ENCODE measurements at regions of chr22 and their contacts with region 1.

Region 1: GRCh38 chr22:37019309-37020125 is at the starts of genes MPST and TST:
- DNase-seq: peak; percentile 65
- ATAC-seq: peak; percentile 82
- H3K4me3 Mint-ChIP-seq: peak within 1 kb of the TSS; percentile 90
- H3K27ac Mint-ChIP-seq: peak within 1 kb of the TSS; percentile 89
- H3K4me1 Mint-ChIP-seq: peaks cover 22% of the 10 kb centered on the region
- H3K27me3 Mint-ChIP-seq: no peaks in the 10 kb centered on the region
- total RNA-seq, gene MPST: 42.3 to 61.0 TPM
- total RNA-seq, gene TST: 11.2 to 29.3 TPM

Region 2: GRCh38 chr22:36663561-36663960 is 356.0 kb before region 1 on chr22:
- CTCF ChIA-PET with region 1: no interaction called
- DNase-seq: no peak
- ATAC-seq: no peak
- H3K4me3 Mint-ChIP-seq: no peak overlapping the region
- H3K27ac Mint-ChIP-seq: no peak overlapping the region
- H3K4me1 Mint-ChIP-seq: no peaks in the 10 kb centered on the region
- H3K27me3 Mint-ChIP-seq: peaks cover 5% of the 10 kb centered on the region

Region 3: GRCh38 chr22:36673821-36674220 is 345.7 kb before region 1 on chr22:
- CTCF ChIA-PET with region 1: no interaction called
- DNase-seq: no peak
- ATAC-seq: no peak
- H3K4me3 Mint-ChIP-seq: no peak overlapping the region
- H3K27ac Mint-ChIP-seq: no peak overlapping the region
- H3K4me1 Mint-ChIP-seq: no peaks in the 10 kb centered on the region
- H3K27me3 Mint-ChIP-seq: peaks cover 24% of the 10 kb centered on the region

Region 4: GRCh38 chr22:36954211-36954891 is 65.2 kb before region 1 on chr22:
- CTCF ChIA-PET with region 1: no interaction called
- DNase-seq: no peak
- ATAC-seq: no peak
- H3K4me3 Mint-ChIP-seq: no peak overlapping the region
- H3K27ac Mint-ChIP-seq: no peak overlapping the region
- H3K4me1 Mint-ChIP-seq: peaks cover 9% of the 10 kb centered on the region
- H3K27me3 Mint-ChIP-seq: peaks cover 5% of the 10 kb centered on the region

Region 5: GRCh38 chr22:37007651-37008050 is 11.9 kb before region 1 on chr22:
- CTCF ChIA-PET with region 1: interaction called, 10 read pairs
- DNase-seq: no peak
- ATAC-seq: no peak
- H3K4me3 Mint-ChIP-seq: no peak overlapping the region
- H3K27ac Mint-ChIP-seq: no peak overlapping the region
- H3K4me1 Mint-ChIP-seq: no peaks in the 10 kb centered on the region
- H3K27me3 Mint-ChIP-seq: peaks cover 46% of the 10 kb centered on the region

Region 6: GRCh38 chr22:37032546-37033460 is 13.3 kb after region 1 on chr22:
- CTCF ChIA-PET with region 1: interaction called, 19 read pairs
- DNase-seq: no peak
- ATAC-seq: no peak
- H3K4me3 Mint-ChIP-seq: no peak overlapping the region
- H3K27ac Mint-ChIP-seq: no peak overlapping the region
- H3K4me1 Mint-ChIP-seq: no peaks in the 10 kb centered on the region
- H3K27me3 Mint-ChIP-seq: peaks cover 24% of the 10 kb centered on the region

Region 7: GRCh38 chr22:37043828-37044538 is 24.5 kb after region 1 on chr22:
- CTCF ChIA-PET with region 1: interaction called, 48 read pairs
- DNase-seq: peak; percentile 78
- ATAC-seq: peak; percentile 92
- H3K4me3 Mint-ChIP-seq: no peak overlapping the region
- H3K27ac Mint-ChIP-seq: no peak overlapping the region
- H3K4me1 Mint-ChIP-seq: peaks cover 26% of the 10 kb centered on the region
- H3K27me3 Mint-ChIP-seq: peaks cover 20% of the 10 kb centered on the region

Region 8: GRCh38 chr22:37109242-37109917 is 89.9 kb after region 1 on chr22 and contains the start of gene TMPRSS6:
- CTCF ChIA-PET with region 1: no interaction called
- DNase-seq: no peak
- ATAC-seq: no peak
- H3K4me3 Mint-ChIP-seq: no peak within 1 kb of the TSS
- H3K27ac Mint-ChIP-seq: no peak within 1 kb of the TSS
- H3K4me1 Mint-ChIP-seq: peaks cover 11% of the 10 kb centered on the region
- H3K27me3 Mint-ChIP-seq: no peaks in the 10 kb centered on the region
- total RNA-seq, gene TMPRSS6: 1.3 to 3.3 TPM